G401 (cell line): ENCODE measurements at regions of chr1 and their contacts with region 1.

Region 1: GRCh38 chr1:115469703-115470476 is 131.8 kb upstream of the NGF start:
- DNase-seq: no peak

Region 2: GRCh38 chr1:115138968-115139367 is 330.9 kb before region 1 on chr1:
- in situ Hi-C with region 1: loop called (anchors 25 kb)
- DNase-seq: peak; percentile 65

Region 3: DNA sequence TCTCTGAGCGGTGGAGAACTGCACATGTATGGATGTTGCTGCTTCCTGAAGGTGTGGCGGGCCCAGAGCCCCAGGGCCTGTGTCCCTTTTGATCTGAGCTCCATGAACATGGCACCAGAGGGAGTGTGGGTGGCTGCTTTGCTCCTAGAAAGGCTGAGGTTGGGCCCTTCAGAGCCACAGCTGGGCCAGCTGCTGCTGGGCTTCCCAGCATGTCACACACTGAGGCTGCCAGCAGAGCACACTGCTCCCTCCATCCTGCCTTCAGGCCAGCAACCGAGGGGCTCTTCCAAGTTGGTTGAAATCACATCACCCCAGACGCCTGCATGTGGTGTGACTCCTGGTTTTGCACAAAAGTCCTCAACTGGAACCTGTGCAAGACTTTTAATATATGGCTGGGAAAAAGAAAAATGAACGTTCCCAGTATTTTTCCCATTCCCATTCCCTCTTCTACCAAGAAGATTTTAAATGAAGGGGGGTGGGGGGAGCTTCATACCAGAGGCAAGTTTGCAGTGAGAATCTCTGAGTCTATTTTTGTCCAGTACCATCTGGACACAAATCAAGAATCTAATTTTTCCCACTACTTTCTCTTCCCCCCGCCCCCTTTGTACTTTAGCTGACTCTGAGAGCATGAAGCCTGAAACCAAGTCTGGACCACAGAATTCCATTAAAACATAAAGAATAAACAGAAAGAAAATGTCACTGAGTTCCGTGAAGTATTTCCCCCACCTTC is 105.7 kb before region 1 on chr1:
- in situ Hi-C with region 1: no loop called
- DNase-seq: no peak

Region 4: GRCh38 chr1:115515270-115515669 is 45.4 kb after region 1 on chr1:
- in situ Hi-C with region 1: no loop called
- DNase-seq: no peak

Region 5: GRCh38 chr1:115564206-115564605 is 94.3 kb after region 1 on chr1:
- in situ Hi-C with region 1: no loop called
- DNase-seq: no peak